ENCODE measurements at regions of chr1 and their contacts with region 1.

Region 1: DNA sequence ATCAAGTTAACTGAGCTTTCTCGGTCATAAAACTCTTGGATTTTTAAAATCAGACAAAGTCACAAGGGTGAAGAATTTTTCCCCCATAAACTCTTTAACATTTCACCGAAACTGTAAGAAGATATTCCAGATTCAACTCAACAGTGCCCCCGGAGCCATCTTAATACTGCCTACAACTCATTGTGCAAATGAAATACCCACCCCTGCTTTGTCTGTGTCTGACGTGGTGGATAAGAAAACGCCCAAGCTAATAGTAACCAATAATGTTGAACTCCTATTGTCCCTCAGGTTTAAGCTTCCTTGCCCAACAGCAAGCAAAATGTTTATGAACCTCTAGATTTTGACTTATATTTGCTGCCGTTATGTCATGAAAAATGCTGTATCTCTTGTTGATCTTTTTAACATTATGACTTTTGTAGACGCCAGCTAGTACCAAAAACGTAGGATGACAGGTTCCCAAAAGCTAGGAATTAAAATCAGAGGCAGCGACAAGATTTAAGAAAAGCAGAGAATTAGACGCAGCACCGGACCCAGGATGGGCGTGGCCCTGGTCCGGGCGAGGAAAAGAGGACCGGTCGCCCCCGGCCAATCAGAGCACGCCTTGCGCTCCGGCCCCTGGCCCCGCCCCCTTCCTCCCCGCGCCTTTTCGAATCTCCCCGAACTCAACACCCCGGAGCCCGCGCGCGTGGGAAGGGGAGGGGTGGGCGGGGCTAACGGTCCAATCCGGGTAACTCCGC is 1.1 kb downstream of the STMN1 start:
- DNase-seq: peak; percentile 97 to 99 (median 98)
- H3K4me3 ChIP-seq: peak overlapping the region; percentile 78 to 98 (median 94)
- H3K27ac ChIP-seq: no peak overlapping the region
- H3K4me1 ChIP-seq: peaks cover 0 to 11% (median 6%) of the 10 kb centered on the region in 3 donors
- H3K27me3 ChIP-seq: no peaks in the 10 kb centered on the region
- CTCF ChIP-seq: no peak

Region 2: DNA sequence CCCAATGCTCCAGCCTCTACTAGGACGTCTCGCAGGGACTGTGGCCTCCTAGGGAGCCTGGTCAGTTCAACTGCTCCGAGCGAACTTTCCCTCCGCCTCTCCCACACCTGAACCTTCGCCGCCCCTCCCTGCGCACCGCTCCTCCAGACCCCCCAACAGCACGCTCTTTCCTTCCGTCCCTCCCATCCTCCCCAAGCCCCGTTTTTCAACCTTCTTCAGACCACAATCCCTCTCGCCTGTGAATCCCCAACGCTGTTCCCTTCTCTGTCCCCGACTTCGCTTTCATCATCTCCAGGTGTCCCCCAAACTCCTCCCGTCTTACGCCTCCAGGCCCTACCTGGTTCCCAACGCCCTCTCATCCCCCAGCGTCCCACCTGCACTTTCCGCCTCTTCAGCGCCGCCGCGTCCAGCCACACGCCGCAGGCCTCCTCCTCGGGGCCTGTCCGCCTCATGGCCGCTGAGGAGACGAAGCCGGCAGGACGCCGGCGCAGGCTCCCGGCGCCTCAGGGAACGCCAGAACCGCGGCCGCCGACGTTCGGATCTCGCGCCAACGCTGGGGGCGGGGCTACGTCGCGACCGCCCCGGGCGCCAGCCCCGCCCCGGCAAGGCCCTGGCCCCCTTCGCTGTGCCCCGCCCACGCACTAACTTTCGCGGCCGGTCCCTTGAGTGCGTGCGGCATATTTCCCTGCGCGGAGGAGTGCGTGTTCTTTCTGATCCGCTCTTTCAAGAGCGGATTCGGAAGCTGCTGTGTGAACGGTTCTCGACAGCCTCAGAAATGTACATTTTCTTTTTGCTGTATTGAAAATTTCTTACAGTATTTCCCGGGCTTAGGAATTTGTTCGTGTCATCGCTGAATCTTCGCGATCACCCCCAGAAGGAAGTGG is 46.0 kb before region 1 on chr1 and contains the start of gene AUNIP:
- intact Hi-C with region 1: no loop called
- DNase-seq: peak; percentile 84 to 96 (median 91)
- H3K4me3 ChIP-seq: peak within 1 kb of the TSS; percentile 72 to 76 (median 75)
- H3K27ac ChIP-seq: peak within 1 kb of the TSS; percentile 63 to 73
- H3K4me1 ChIP-seq: peaks cover 0 to 4% (median 0%) of the 10 kb centered on the region in 3 donors
- H3K27me3 ChIP-seq: no peaks in the 10 kb centered on the region
- CTCF ChIP-seq: no peak
- total RNA-seq, gene AUNIP: 0.38 TPM

Region 3: DNA sequence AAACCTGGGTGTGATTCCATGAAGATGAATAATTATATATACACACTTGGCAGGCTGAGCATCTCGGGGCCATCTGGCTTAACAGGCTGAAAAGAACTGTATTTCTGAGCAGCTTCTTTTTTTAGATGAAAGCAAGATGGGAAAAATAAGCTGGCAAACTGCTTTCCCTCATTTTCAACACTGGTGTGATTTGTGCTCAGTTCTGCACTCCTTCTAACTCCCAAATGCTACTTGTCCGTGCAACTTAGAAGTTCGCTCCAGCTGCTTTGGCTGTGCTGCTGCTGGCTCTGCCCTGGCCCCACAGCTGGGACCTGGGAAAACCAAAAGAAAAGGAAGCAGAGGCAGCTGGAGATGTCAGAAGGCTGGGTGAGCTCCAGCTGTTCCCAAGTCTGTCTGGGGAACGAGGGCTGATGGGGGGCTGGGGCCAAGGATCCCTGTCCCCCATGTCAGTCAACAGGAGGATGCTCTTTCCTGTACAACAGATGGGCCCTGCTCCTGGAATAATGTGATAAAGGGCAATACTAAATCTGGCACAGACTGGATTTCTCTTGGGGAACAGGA is 47.8 kb after region 1 on chr1:
- intact Hi-C with region 1: no loop called
- DNase-seq: peak in 4 of 5 donors; percentile 52 to 94 (median 68)
- H3K4me3 ChIP-seq: no peak overlapping the region
- H3K27ac ChIP-seq: no peak overlapping the region
- H3K4me1 ChIP-seq: no peaks in the 10 kb centered on the region
- H3K27me3 ChIP-seq: no peaks in the 10 kb centered on the region
- CTCF ChIP-seq: no peak

Region 4: GRCh38 chr1:25997828-25998761 is 93.0 kb after region 1 on chr1 and contains the start of gene PAFAH2:
- intact Hi-C with region 1: loop called (anchors 5 kb)
- DNase-seq: peak; percentile 98 to 100 (median 99)
- H3K4me3 ChIP-seq: peak within 1 kb of the TSS; percentile 76 to 84 (median 77)
- H3K27ac ChIP-seq: peak within 1 kb of the TSS; percentile 77 to 89
- H3K4me1 ChIP-seq: peaks cover 7 to 13% (median 10%) of the 10 kb centered on the region in 3 donors
- H3K27me3 ChIP-seq: no peaks in the 10 kb centered on the region
- CTCF ChIP-seq: peak; percentile 99
- total RNA-seq, gene PAFAH2: 23.5 TPM